ENCODE measurements at regions of chr12 and their contacts with region 1.

Region 1: DNA sequence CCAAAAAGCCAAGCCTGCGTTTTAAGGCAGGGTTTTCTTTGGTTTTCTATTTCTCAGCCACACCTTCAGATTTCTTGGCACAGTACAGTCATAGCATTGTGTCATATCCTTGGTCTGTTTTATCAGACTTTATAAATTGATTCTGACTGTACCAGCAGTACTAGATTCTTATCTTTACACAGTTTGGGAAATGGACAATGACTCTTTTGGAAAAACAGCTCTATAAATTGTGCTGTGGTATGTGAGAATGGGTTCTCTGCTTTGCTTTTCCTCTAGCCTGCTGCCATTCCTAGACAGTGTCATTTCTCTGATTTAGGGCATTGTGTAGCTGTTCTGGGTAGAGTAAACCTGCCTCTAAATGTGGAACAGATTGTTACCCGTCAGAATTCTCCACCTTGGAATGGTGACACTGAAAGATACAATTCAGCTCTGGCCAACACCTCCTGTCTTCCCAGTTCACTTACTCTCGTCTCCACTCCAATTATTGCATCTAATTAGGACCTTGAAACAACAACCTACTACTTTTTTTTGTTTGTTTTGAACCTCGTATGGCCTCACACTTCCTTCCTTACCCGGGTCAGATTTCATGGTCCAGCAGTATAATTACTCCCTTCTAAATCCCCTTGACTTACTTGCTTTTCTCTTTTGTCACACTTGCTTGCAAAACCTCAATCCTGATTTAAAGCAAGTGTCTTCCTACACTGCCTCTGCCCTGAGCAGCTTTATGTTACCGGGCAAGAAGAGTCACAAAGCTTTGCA is 226.3 kb downstream of the ERC1 start:
- DNase-seq: peak; percentile 33 to 95
- H3K4me3 ChIP-seq: peak overlapping the region; percentile 41
- H3K27ac ChIP-seq: peak overlapping the region; percentile 83
- H3K4me1 ChIP-seq: peaks cover 50% of the 10 kb centered on the region
- H3K27me3 ChIP-seq: no peaks in the 10 kb centered on the region
- CTCF ChIP-seq: no peak

Region 2: DNA sequence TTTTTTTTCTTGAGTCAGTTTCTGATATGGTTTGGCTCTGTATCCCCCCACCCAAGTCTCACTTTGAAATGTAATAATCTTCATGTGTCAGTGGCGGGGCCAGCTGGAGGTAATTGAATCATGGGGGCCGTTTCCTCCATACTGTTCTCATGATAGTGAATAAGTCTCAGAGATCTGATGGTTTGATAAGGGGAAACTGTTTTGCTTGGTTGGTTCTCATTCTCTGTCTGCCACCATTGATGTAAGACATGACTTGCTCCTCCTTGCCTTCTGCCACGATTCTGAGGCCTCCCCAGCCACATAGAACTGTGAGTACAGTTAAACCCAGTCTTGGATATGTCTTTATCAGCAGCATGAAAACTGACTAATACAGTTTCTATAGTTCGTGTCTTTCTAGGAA is 422.1 kb before region 1 on chr12:
- CTCF ChIA-PET with region 1: no interaction called
- POLR2A ChIA-PET with region 1: interaction called, 14 read pairs
- intact Hi-C with region 1: no loop called
- DNase-seq: no peak
- H3K4me3 ChIP-seq: no peak overlapping the region
- H3K27ac ChIP-seq: no peak overlapping the region
- H3K4me1 ChIP-seq: peaks cover 8% of the 10 kb centered on the region
- H3K27me3 ChIP-seq: no peaks in the 10 kb centered on the region
- CTCF ChIP-seq: no peak

Region 3: GRCh38 chr12:1583421-1584078 is 366.2 kb after region 1 on chr12:
- CTCF ChIA-PET with region 1: no interaction called
- POLR2A ChIA-PET with region 1: no interaction called
- intact Hi-C with region 1: loop called (anchors 10 kb)
- DNase-seq: peak; percentile 73 to 77
- H3K4me3 ChIP-seq: peak overlapping the region; percentile 32; the same call in 1 of the 2 replicates
- H3K27ac ChIP-seq: no peak overlapping the region
- H3K4me1 ChIP-seq: peaks cover 6% of the 10 kb centered on the region
- H3K27me3 ChIP-seq: no peaks in the 10 kb centered on the region
- CTCF ChIP-seq: peak; percentile 98

Measured in PC-9 (cell line).